Lower leg skin (tissue), 4 donors: ENCODE measurements at regions of chr6 and their contacts with region 1.

Region 1: GRCh38 chr6:158220786-158221442 is 52.8 kb downstream of the GTF2H5 start:
- DNase-seq: peak; percentile 63 to 96
- H3K4me3 ChIP-seq: no peak overlapping the region
- CTCF ChIP-seq: peak in 2 of 3 donors; percentile 29 to 66
- POLR2A ChIP-seq: no peak

Region 2: DNA sequence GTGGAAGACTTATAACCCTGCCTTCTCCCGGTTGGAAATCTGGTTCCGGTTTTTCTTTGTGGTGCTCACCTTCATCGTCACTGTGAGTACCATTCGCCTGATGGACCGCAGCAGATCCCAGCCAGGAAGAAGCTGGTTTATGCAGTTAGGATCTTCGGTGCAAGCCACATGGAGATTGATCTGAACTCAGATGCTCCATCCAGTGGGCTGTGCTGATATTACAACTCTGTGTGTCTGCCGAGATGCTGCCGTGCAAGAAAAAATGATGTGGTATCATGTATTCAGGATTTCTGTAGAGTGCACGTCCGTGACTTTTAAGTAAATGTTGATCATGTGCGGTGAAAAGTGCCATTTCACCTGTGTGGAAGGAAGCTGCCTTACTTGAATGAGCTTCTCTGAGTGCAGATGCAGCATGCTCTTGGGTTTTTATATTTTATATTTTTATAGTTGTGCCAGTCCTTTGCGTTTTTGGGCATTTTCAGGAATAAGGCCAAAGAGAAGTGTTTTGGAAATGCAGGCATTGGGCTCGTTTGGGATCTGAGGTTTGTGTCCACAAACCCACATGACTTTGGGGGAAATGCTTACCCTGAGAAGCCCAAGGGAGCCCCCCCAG is 384.5 kb after region 1 on chr6:
- intact Hi-C with region 1: loop called (anchors 5 kb)
- DNase-seq: peak in 1 of 2 donors; percentile 47
- H3K4me3 ChIP-seq: no peak overlapping the region
- CTCF ChIP-seq: peak in 1 of 3 donors; percentile 22
- POLR2A ChIP-seq: no peak

Region 3: GRCh38 chr6:158697811-158698210 is 476.9 kb after region 1 on chr6:
- intact Hi-C with region 1: loop called (anchors 5 kb)
- DNase-seq: peak in 1 of 2 donors; percentile 36
- H3K4me3 ChIP-seq: no peak overlapping the region
- CTCF ChIP-seq: no peak
- POLR2A ChIP-seq: no peak